HCT116 (cell line): ENCODE measurements at regions of chr13 and their contacts with region 1.

Region 1: GRCh38 chr13:76473552-76474134 is 412.6 kb downstream of the KCTD12 start:
- DNase-seq: peak; percentile 75
- ATAC-seq: peak; percentile 100
- H3K4me3 ChIP-seq: no peak overlapping the region
- H3K27ac ChIP-seq: no peak overlapping the region
- H3K4me1 ChIP-seq: no peaks in the 10 kb centered on the region
- H3K27me3 ChIP-seq: no peaks in the 10 kb centered on the region
- CTCF ChIP-seq: peak; percentile 68 to 80 (median 69)
- POLR2A ChIP-seq: no peak
- RAD21 ChIP-seq: peak; percentile 82

Region 2: GRCh38 chr13:75675421-75675820 is 798.2 kb before region 1 on chr13:
- CTCF ChIA-PET with region 1: interaction called, 3 read pairs
- POLR2A ChIA-PET with region 1: no interaction called
- RAD21 ChIA-PET with region 1: no interaction called
- intact Hi-C with region 1: loop called (anchors 5 kb)
- DNase-seq: no peak
- ATAC-seq: no peak
- H3K4me3 ChIP-seq: no peak overlapping the region
- H3K27ac ChIP-seq: no peak overlapping the region
- H3K4me1 ChIP-seq: no peaks in the 10 kb centered on the region
- H3K27me3 ChIP-seq: no peaks in the 10 kb centered on the region
- CTCF ChIP-seq: no peak
- POLR2A ChIP-seq: no peak
- RAD21 ChIP-seq: no peak

Region 3: GRCh38 chr13:75694722-75695121 is 778.9 kb before region 1 on chr13:
- CTCF ChIA-PET with region 1: interaction called, 6 read pairs
- POLR2A ChIA-PET with region 1: no interaction called
- RAD21 ChIA-PET with region 1: no interaction called
- intact Hi-C with region 1: loop called (anchors 2 kb)
- DNase-seq: no peak
- ATAC-seq: no peak
- H3K4me3 ChIP-seq: no peak overlapping the region
- H3K27ac ChIP-seq: no peak overlapping the region
- H3K4me1 ChIP-seq: no peaks in the 10 kb centered on the region
- H3K27me3 ChIP-seq: no peaks in the 10 kb centered on the region
- CTCF ChIP-seq: no peak
- POLR2A ChIP-seq: no peak
- RAD21 ChIP-seq: no peak

Region 4: GRCh38 chr13:76038920-76039716 is 434.5 kb before region 1 on chr13:
- CTCF ChIA-PET with region 1: interaction called, 9 read pairs
- POLR2A ChIA-PET with region 1: no interaction called
- RAD21 ChIA-PET with region 1: no interaction called
- intact Hi-C with region 1: loop called (anchors 1 kb)
- DNase-seq: no peak
- ATAC-seq: peak; percentile 61
- H3K4me3 ChIP-seq: no peak overlapping the region
- H3K27ac ChIP-seq: no peak overlapping the region
- H3K4me1 ChIP-seq: no peaks in the 10 kb centered on the region
- H3K27me3 ChIP-seq: no peaks in the 10 kb centered on the region
- CTCF ChIP-seq: 0 out of 6 replicates have a peak, but pooled peaks have one; percentile 9 to 27 (median 10)
- POLR2A ChIP-seq: no peak
- RAD21 ChIP-seq: peak; percentile 24; the same call in 1 of the 2 replicates

Region 5: DNA sequence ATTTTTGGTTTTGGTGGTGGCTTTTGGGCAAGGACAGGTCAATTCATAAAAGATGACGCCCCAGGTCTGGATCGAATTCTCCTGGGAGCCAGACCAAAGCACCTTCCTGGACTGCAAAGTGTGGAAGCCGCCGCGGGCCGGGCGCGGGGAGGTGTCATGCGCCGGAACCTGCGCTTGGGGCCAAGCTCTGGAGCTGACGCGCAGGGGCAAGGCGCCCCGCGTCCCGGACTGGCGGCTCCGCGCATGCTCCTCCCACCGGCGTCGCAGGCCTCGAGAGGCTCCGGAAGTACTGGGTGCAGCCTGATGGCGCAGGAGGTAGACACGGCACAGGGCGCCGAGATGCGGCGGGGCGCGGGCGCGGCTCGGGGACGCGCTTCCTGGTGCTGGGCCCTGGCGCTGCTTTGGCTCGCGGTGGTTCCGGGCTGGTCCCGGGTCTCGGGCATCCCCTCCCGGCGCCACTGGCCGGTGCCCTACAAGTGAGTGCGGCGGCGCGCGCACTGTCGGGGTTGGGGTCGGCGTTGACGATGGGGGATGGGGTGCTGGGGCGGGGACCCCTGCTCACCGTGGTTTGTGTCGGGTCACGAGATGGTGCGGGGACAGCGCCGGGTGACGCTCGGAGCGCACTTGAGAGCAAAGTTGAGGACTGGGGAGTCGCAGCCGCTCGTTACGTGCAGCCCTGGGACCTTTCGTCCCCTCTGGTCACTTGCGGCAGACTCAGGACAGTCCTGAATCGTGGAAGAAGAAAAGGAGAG is 518.3 kb after region 1 on chr13 and contains the start of gene CLN5:
- CTCF ChIA-PET with region 1: no interaction called
- POLR2A ChIA-PET with region 1: no interaction called
- RAD21 ChIA-PET with region 1: no interaction called
- intact Hi-C with region 1: no loop called
- DNase-seq: peak; percentile 77
- ATAC-seq: peak; percentile 99
- H3K4me3 ChIP-seq: peak within 1 kb of the TSS; percentile 89 to 95
- H3K27ac ChIP-seq: peak within 1 kb of the TSS; percentile 54
- H3K4me1 ChIP-seq: peaks cover 9 to 20% of the 10 kb centered on the region in 2 experiments; a peak in 3 of 4 replicates
- H3K27me3 ChIP-seq: no peaks in the 10 kb centered on the region
- CTCF ChIP-seq: no peak
- POLR2A ChIP-seq: peak; percentile 55
- RAD21 ChIP-seq: no peak
- total RNA-seq, gene CLN5: 21.4 TPM

Region 6: DNA sequence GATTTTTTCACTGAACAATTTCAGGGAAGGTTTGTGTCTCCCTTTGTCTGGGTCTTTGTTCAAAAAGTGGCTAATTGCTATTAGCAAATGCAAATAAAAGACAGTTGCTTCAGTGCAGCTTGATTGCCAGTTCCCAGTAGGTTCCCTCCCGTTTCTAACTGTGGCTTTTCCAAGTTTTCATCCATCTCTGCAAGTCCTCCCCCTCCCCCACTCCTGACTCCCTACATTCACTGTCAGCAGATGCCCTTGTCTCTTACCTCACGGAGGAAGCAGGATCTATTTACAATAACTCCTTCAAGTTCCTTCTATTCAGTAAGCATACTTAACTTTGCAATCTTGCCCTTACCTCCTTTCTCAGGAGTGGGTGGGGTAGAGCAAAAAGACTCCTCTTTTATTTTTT is 1006.4 kb after region 1 on chr13:
- CTCF ChIA-PET with region 1: no interaction called
- POLR2A ChIA-PET with region 1: no interaction called
- RAD21 ChIA-PET with region 1: no interaction called
- intact Hi-C with region 1: loop called (anchors 10 kb)
- DNase-seq: no peak
- ATAC-seq: no peak
- H3K4me3 ChIP-seq: no peak overlapping the region
- H3K27ac ChIP-seq: no peak overlapping the region
- H3K4me1 ChIP-seq: peaks cover 0 to 7% of the 10 kb centered on the region in 2 experiments; a peak in 2 of 4 replicates
- H3K27me3 ChIP-seq: no peaks in the 10 kb centered on the region
- CTCF ChIP-seq: no peak
- POLR2A ChIP-seq: no peak
- RAD21 ChIP-seq: no peak